Aorta (tissue), 5 donors: ENCODE measurements at regions of chr4 and their contacts with region 1.

Region 1: DNA sequence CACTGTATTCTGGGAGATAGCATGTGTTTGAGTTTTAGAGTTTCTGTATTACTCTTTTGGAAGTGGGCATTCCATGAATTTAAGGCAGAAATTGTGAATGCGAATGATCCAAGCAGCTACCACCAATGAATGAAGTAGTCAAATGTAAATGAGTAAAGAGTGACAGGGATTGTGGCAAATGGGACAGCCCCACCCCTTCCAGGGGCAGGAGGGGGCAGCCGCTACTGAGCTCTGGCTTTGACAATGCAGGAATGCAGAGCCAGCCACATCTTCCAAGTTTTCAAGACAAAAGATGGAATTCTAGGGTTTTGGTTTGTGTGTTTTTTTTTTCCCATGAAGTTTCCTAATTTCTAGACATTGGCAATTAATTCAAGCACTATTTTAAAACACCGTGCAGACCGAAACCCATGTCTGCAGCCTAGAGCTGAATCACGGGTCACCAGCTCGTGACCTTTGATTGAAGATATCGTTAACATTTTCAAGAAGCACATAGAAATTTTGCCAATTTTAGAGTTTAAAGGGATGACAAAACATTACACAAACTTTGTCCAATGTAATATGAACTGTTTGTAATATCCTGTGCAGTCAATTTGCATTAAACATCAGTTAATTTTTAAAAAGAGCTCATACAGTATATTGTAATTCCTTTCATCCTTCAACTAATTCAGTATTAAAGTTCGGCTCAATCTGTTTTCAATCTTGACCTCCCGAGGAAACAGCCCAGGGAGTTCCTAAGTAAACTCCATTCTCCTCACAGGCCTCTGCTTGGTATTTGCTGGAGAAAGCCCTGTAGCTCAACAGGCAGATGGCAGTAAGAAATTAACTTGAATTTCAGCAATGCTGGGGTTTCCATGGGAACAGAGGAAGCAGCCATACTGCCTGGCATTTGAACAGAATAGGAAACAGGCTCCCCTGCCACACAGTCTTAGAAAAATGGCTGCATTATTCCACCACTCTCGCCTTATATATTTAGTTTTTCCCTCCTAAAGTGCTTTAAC is 83.4 kb downstream of the UCHL1 start:
- DNase-seq: no peak
- ATAC-seq: peak; percentile 77
- H3K4me3 ChIP-seq: no peak overlapping the region
- H3K27ac ChIP-seq: no peak overlapping the region
- H3K4me1 ChIP-seq: no peaks in the 10 kb centered on the region
- H3K27me3 ChIP-seq: no peaks in the 10 kb centered on the region

Region 2: DNA sequence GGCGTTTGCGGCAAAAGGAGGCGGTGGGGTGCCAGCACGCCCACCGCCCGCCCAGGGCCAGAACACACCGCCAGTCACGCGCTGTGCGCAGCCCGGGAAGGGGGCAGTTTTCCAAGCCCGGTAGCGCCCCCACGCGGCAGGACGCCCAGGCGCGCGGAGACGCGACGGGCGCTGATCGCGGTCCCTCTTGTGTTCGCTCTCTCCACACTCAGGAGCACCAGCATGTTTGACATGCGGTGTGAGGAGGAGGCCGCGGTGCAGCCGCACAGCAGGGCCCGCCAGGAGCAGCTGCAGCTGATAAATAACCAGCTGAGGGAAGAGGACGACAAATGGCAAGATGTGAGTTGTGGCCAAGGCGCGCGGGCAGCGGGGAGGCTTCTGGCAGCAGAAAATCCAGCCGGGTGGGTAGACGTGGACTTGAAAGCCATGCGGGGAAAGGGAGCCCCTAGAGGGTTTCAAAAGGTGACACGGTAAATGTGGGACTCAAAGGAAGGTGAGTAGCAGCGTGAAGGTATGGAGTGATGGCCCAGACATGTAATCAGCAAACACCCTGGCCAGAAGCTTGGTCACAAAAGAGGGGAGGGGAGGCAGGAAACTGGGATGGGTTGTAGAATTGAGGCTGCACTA is 304.3 kb after region 1 on chr4:
- intact Hi-C with region 1: loop called (anchors 1 to 5 kb)
- DNase-seq: peak; percentile 80 to 94
- ATAC-seq: peak; percentile 90
- H3K4me3 ChIP-seq: no peak overlapping the region
- H3K27ac ChIP-seq: no peak overlapping the region
- H3K4me1 ChIP-seq: peaks cover 2 to 3% of the 10 kb centered on the region in 2 donors
- H3K27me3 ChIP-seq: no peaks in the 10 kb centered on the region

Region 3: DNA sequence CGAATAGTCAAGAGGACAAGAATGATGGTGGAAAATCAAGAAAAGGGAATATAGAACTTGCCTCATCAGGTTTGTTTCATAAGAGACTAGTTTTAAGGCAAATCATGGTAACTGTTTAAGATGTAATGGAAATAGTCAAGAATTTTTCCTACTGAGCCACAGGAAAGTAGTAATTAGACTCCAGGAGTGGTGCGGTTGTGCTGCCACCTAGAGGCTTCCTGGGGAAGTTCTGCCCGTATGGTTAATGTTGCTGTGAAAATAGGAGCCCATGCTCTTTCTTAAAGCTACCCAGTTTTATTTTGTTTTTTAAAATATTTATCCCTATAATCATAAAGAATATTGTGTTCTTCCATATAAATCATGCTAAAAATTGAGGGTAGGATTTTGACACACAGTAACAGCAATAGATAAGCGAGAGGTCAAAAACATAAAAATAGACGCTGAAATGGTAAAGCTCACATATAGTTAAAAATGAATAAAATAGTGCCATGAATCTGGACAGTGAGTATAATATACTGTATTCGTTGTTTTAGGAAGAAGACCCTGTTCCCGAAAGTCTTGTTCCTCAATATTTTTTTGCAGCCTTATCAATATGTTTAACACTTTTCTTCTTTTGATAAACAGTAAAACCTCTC is 321.4 kb after region 1 on chr4:
- intact Hi-C with region 1: loop called (anchors 1 to 5 kb)
- DNase-seq: peak; percentile 60 to 86
- ATAC-seq: peak; percentile 84
- H3K4me3 ChIP-seq: no peak overlapping the region
- H3K27ac ChIP-seq: no peak overlapping the region
- H3K4me1 ChIP-seq: peaks cover 0 to 2% of the 10 kb centered on the region in 2 donors
- H3K27me3 ChIP-seq: no peaks in the 10 kb centered on the region

Region 4: DNA sequence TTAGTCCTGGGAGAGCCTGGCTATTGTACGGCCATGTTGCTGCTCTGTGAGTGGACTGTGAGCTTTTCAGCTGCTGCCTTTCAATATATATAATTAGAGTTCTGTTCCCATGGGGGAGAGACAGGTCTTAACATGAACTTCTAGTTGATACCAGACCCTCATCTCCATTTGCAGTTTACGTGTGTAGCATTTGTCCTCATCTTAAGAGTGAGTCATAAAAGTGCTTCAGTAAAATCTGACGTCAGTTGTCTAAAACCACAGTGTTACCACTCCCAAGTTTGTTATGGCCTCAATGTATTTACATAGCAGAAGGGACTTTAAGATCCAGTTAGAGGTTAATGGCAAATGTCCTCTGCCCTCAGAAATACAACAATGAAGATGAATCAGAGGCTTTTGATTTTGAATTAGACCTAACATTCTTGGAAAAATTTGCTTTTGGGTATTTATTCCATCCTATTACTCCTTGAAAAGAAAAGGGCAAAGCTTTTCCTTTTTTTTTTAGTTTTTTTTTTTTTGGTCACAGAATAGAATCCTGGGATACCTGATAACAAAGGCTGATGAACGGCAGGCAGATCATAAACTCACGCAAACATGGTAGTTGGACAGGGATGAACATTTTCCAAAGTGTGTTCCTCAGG is 369.9 kb after region 1 on chr4:
- intact Hi-C with region 1: no loop called
- DNase-seq: no peak
- ATAC-seq: no peak
- H3K4me3 ChIP-seq: no peak overlapping the region
- H3K27ac ChIP-seq: no peak overlapping the region
- H3K4me1 ChIP-seq: no peaks in the 10 kb centered on the region
- H3K27me3 ChIP-seq: no peaks in the 10 kb centered on the region